IMR-90 (cell line): ENCODE measurements at regions of chr10 and their contacts with region 1.

Region 1: DNA sequence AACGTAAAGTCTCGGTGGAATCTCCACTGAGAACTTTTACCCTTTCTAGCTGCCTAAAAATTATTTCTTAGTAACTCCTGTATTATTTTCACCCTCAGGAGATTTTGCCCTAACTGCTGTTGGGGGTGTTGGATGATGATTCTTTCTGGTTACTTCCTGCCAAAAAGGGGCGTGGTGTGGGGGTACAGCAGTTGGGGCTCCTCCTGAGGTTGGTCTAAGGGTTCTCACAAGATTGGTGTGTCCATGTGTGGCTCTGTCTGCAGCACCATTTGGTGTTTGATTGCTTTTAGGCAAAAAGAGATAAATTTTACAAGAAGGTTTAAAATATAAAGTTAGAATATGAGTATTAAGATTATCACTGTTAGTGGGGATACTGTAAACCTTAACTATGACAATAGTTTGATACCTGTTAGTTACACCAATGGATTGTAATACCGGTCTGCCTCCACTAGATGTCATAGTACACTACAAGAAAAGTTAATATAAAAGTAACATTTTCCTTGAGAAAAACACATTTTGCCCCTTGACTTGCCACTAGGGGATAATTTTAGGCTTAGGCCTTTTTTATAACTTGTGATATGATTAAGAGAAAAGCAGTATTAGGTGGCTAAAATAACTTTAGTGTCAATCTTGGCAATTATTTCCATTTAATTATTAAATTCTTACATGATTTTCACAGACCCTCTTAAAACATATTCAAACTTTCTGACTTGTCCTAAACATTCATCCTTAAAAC is 928.7 kb downstream of the IPMK start:
- DNase-seq: peak; percentile 41
- ATAC-seq: peak; percentile 74
- H3K4me3 ChIP-seq: no peak overlapping the region
- H3K27ac ChIP-seq: no peak overlapping the region
- H3K4me1 ChIP-seq: no peaks in the 10 kb centered on the region
- H3K27me3 ChIP-seq: no peaks in the 10 kb centered on the region
- CTCF ChIP-seq: peak; percentile 64
- POLR2A ChIP-seq: no peak
- RAD21 ChIP-seq: peak; percentile 49

Region 2: DNA sequence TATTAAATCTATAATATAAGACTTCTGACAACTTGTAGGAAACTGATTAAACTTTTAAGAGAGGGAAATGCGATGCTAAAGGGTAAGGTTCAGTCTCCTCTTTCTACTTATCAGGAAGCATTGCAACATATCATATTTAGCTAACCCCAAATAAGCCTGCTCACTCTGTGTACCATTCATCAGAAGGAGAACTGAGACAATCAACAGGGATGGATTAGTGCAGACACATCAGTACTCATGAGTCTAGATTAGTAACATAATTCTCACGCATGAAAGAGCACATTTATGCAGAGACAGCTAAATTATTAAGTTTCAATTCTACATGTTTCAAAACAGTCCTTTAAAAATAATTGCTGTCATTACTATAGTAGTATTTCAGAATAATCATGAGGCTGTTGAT is 623.7 kb before region 1 on chr10:
- CTCF ChIA-PET with region 1: no interaction called
- POLR2A ChIA-PET with region 1: no interaction called
- dilution Hi-C with region 1: no loop called
- in situ Hi-C with region 1: no loop called
- intact Hi-C with region 1: no loop called
- DNase-seq: no peak
- ATAC-seq: no peak
- H3K4me3 ChIP-seq: no peak overlapping the region
- H3K27ac ChIP-seq: no peak overlapping the region
- H3K4me1 ChIP-seq: no peaks in the 10 kb centered on the region
- H3K27me3 ChIP-seq: no peaks in the 10 kb centered on the region
- CTCF ChIP-seq: no peak
- POLR2A ChIP-seq: no peak
- RAD21 ChIP-seq: no peak

Region 3: DNA sequence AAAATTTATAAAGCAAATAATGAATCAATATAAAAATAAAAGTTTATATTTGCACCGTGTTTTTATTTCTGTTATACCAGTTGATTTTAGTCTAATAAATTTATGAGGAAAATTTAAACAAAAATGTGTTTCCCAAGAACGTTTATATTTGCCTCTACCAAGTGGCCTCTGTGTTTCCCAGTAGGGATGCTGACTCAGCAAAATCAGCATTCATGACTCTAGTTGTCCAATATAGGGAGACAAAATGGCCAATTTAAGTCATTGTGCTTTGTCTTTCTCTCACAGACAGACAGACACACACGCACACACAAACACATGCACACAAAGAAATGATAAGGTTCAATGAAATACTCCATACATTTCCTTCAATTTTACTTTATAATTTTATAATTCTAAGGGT is 35.4 kb before region 1 on chr10:
- CTCF ChIA-PET with region 1: no interaction called
- POLR2A ChIA-PET with region 1: no interaction called
- dilution Hi-C with region 1: no loop called
- in situ Hi-C with region 1: no loop called
- intact Hi-C with region 1: no loop called
- DNase-seq: no peak
- ATAC-seq: no peak
- H3K4me3 ChIP-seq: no peak overlapping the region
- H3K27ac ChIP-seq: no peak overlapping the region
- H3K4me1 ChIP-seq: no peaks in the 10 kb centered on the region
- H3K27me3 ChIP-seq: no peaks in the 10 kb centered on the region
- CTCF ChIP-seq: no peak
- POLR2A ChIP-seq: no peak
- RAD21 ChIP-seq: no peak

Region 4: GRCh38 chr10:57362811-57363210 is 23.8 kb after region 1 on chr10:
- CTCF ChIA-PET with region 1: no interaction called
- POLR2A ChIA-PET with region 1: no interaction called
- dilution Hi-C with region 1: no loop called
- in situ Hi-C with region 1: no loop called
- intact Hi-C with region 1: no loop called
- DNase-seq: no peak
- ATAC-seq: no peak
- H3K4me3 ChIP-seq: no peak overlapping the region
- H3K27ac ChIP-seq: no peak overlapping the region
- H3K4me1 ChIP-seq: no peaks in the 10 kb centered on the region
- H3K27me3 ChIP-seq: no peaks in the 10 kb centered on the region
- CTCF ChIP-seq: no peak
- POLR2A ChIP-seq: no peak
- RAD21 ChIP-seq: no peak

Region 5: GRCh38 chr10:57657164-57657765 is 318.3 kb after region 1 on chr10:
- CTCF ChIA-PET with region 1: no interaction called
- POLR2A ChIA-PET with region 1: no interaction called
- dilution Hi-C with region 1: no loop called
- in situ Hi-C with region 1: no loop called
- intact Hi-C with region 1: loop called (anchors 5 kb)
- DNase-seq: peak; percentile 39
- ATAC-seq: 0 out of 2 replicates have a peak, but pooled peaks have one; percentile 46
- H3K4me3 ChIP-seq: no peak overlapping the region
- H3K27ac ChIP-seq: no peak overlapping the region
- H3K4me1 ChIP-seq: no peaks in the 10 kb centered on the region
- H3K27me3 ChIP-seq: no peaks in the 10 kb centered on the region
- CTCF ChIP-seq: peak; percentile 66
- POLR2A ChIP-seq: no peak
- RAD21 ChIP-seq: peak; percentile 70

Region 6: GRCh38 chr10:57849691-57850357 is 510.8 kb after region 1 on chr10:
- CTCF ChIA-PET with region 1: no interaction called
- POLR2A ChIA-PET with region 1: no interaction called
- dilution Hi-C with region 1: no loop called
- in situ Hi-C with region 1: no loop called
- intact Hi-C with region 1: loop called (anchors 5 kb)
- DNase-seq: peak; percentile 2
- ATAC-seq: no peak
- H3K4me3 ChIP-seq: no peak overlapping the region
- H3K27ac ChIP-seq: no peak overlapping the region
- H3K4me1 ChIP-seq: no peaks in the 10 kb centered on the region
- H3K27me3 ChIP-seq: no peaks in the 10 kb centered on the region
- CTCF ChIP-seq: peak; percentile 42
- POLR2A ChIP-seq: no peak
- RAD21 ChIP-seq: peak; percentile 39

Region 7: DNA sequence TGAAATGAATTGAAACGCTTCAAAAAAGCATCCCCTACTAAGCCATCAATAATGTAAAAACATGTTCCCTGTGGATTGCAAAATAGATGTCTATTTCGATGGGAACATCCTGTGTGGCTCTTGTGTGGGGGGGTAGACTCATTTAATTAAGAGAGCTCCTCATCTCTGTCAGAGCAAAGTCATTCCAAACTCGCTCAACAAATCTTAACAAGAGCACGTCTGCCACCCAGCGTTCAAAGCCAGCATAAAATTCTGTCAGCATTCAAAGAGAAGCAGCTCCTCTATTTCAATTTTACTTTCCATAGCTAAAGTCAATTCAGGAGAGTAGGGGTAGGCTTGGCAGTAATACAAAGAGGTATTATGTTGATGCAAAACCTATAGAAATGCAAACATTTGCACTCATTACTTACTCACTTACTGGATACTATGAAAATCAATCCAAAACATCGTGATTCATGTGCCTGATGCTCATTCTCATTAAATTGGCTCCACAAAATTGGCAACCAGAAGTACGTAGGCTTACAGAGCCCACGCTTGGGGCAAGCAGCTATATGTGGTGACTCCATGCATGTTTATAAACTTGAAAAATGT is 813.8 kb after region 1 on chr10:
- CTCF ChIA-PET with region 1: no interaction called
- POLR2A ChIA-PET with region 1: no interaction called
- dilution Hi-C with region 1: no loop called
- in situ Hi-C with region 1: no loop called
- intact Hi-C with region 1: loop called (anchors 1 kb)
- DNase-seq: peak; percentile 53
- ATAC-seq: peak; percentile 58; the same call in 1 of the 2 replicates
- H3K4me3 ChIP-seq: no peak overlapping the region
- H3K27ac ChIP-seq: no peak overlapping the region
- H3K4me1 ChIP-seq: no peaks in the 10 kb centered on the region
- H3K27me3 ChIP-seq: peaks cover 6% of the 10 kb centered on the region
- CTCF ChIP-seq: peak; percentile 60
- POLR2A ChIP-seq: no peak
- RAD21 ChIP-seq: peak; percentile 50